Activated B cell treated with CpG ODN at 0.5 μM for 24 hours (primary cell): ENCODE measurements at regions of chr20 and their contacts with region 1.

Region 1: DNA sequence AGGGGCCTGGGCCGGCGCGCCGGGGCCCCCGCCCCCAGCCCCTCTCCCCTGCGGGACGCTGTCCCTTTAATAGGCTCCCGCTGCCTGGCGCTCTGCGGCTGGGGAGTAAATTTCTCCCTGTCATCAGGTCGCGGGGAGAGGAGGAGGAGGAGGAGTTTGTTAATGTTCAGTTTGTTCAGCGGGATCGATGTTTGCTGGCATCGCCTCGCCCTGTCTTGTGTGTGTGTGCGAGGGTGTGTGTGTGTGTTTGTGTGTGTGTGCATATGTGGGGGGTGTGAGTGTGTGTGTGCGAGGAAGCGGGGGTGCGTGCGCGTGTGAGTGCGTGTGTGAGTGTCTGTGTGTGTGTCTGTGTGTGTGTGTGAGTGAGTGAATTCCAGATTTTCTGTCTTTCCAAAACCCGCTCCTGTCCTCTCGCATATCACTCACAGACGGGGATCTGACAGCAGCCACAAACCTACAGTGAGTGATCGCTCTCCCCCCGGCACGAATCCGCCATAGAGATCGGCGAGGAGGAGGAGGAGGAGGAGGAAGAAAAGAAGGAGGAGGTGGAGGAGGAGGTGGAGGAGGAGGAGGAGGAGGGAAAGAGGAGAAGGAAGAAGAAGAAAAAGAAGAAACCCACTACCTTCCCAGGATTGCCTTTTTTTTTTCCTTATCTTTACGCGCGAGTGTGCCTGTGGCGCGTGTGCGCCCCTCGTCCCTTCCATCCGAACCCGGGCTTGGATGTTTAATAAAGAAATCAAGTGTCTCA is at the start of gene TSHZ2:
- DNase-seq: no peak
- ATAC-seq: peak; percentile 33
- H3K4me3 Mint-ChIP-seq: peak within 1 kb of the TSS; percentile 84
- H3K27ac Mint-ChIP-seq: peak within 1 kb of the TSS; percentile 72
- H3K4me1 Mint-ChIP-seq: peaks cover 25% of the 10 kb centered on the region
- H3K27me3 Mint-ChIP-seq: peaks cover 38% of the 10 kb centered on the region
- CTCF ChIP-seq: no peak
- total RNA-seq, gene TSHZ2: 1.5 and 1.7 TPM in 2 replicates

Region 2: DNA sequence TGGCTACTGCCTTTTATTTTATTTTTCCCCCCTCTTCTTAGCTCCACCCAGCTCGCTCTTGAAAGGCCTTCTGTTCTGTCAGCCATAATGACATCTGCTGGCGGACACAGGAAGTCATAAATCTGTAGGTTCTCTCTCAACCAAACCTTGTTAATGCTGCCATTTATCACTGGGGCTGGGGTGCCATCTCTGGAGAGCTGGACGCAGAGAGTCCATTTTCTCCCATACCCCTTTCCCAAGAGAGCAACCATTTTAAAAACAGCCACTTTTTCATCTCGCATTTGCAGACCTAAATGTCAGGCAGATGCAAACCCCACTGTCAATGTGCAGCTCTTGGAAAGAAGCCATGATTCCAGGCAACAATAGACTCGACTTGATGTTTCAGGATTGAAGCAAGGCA is 13.2 kb before region 1 on chr20:
- CTCF ChIA-PET with region 1: no interaction called
- POLR2A ChIA-PET with region 1: no interaction called
- intact Hi-C with region 1: no loop called
- DNase-seq: no peak
- ATAC-seq: no peak
- H3K4me3 Mint-ChIP-seq: no peak overlapping the region
- H3K27ac Mint-ChIP-seq: no peak overlapping the region
- H3K4me1 Mint-ChIP-seq: peaks cover 6% of the 10 kb centered on the region
- H3K27me3 Mint-ChIP-seq: peaks cover 3% of the 10 kb centered on the region
- CTCF ChIP-seq: no peak

Region 3: DNA sequence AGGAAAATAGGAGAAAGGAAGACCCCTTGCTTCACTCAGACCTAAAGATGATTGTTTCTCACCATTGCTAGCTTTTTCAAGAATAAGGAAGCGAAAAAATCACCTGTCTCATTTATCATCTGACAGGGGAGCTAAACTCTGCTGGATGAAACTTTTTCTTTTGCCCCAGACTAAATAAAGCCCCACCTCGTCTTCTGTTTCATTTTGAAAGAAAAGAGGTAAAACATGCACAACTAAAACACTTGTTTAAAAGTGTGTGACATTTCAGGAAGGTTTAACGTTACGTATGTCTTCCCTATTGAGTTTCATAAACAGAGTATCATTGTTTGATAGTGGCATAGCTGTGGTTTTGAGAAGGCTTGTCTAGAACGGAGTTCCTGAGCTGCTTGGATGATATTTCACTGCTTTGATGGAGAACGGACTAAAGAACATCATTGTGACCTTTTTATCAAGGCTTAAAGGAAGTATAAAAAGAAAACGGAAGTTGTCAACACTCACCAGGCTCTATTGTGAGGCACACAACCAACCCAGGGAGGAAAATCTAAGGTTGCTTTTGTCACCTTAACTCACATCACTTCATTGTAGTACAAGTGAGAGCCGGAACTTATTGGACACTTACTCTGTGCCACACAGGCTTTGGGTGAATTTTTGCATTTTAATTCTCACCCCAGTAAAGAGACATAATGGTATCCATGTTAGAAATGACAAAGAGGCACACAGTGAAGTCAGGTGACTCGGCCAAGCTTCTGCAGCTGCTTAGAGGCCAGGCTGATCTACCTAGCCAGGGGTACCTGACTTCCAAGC is 29.3 kb after region 1 on chr20:
- CTCF ChIA-PET with region 1: no interaction called
- POLR2A ChIA-PET with region 1: interaction called, 9 read pairs
- intact Hi-C with region 1: loop called (anchors 2 kb)
- DNase-seq: no peak
- ATAC-seq: peak; percentile 77
- H3K4me3 Mint-ChIP-seq: peak overlapping the region; percentile 70
- H3K27ac Mint-ChIP-seq: peak overlapping the region; percentile 91
- H3K4me1 Mint-ChIP-seq: peaks cover 22% of the 10 kb centered on the region
- H3K27me3 Mint-ChIP-seq: no peaks in the 10 kb centered on the region
- CTCF ChIP-seq: no peak